Activated CD4-positive, alpha-beta T cell treated with anti-CD3 and anti-CD28 coated beads, Interleukin-2, amount 10 ng/mL, durations not matched to agents 24 days and 14 days (primary cell): ENCODE measurements at regions of chr6 and their contacts with region 1.

Region 1: GRCh38 chr6:111478749-111479148 is 4.3 kb downstream of the REV3L start:
- DNase-seq: peak; percentile 68
- H3K4me3 Mint-ChIP-seq: peak overlapping the region; percentile 20
- H3K27ac Mint-ChIP-seq: peak overlapping the region; percentile 70
- H3K4me1 Mint-ChIP-seq: peaks cover 26% of the 10 kb centered on the region
- H3K27me3 Mint-ChIP-seq: no peaks in the 10 kb centered on the region

Region 2: GRCh38 chr6:111361648-111362047 is 117.1 kb before region 1 on chr6:
- intact Hi-C with region 1: loop called (anchors 5 kb)
- DNase-seq: no peak
- H3K4me3 Mint-ChIP-seq: no peak overlapping the region
- H3K27ac Mint-ChIP-seq: no peak overlapping the region
- H3K4me1 Mint-ChIP-seq: no peaks in the 10 kb centered on the region
- H3K27me3 Mint-ChIP-seq: no peaks in the 10 kb centered on the region

Region 3: DNA sequence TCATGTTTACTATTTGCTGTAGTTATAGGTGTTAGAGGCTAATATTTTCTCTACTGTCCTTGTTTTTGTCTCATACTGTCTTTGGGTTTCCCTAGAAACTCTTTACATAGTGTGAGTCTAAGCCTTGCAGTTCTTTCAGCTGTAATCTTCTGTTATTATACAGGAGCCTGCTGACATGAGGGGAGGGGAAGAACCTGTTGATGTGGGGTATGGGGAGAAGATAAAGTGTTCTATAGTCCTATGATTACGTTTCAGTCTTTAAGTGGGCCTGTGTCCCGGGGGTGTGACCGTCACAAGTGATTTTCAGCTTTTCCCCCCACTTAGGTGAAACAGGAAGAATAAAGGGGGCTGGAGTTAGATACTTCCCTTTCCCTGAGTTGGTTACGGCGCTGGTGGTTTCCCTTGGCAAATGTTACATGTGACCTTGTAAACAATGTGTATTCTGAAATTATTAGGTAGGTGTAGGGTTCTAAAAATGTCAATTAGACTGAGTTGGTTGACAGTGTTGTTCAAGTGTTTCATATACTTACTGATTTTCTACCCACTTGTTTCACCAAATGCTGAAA is 37.0 kb before region 1 on chr6:
- intact Hi-C with region 1: loop called (anchors 5 kb)
- DNase-seq: no peak
- H3K4me3 Mint-ChIP-seq: no peak overlapping the region
- H3K27ac Mint-ChIP-seq: no peak overlapping the region
- H3K4me1 Mint-ChIP-seq: peaks cover 8% of the 10 kb centered on the region
- H3K27me3 Mint-ChIP-seq: no peaks in the 10 kb centered on the region

Region 4: DNA sequence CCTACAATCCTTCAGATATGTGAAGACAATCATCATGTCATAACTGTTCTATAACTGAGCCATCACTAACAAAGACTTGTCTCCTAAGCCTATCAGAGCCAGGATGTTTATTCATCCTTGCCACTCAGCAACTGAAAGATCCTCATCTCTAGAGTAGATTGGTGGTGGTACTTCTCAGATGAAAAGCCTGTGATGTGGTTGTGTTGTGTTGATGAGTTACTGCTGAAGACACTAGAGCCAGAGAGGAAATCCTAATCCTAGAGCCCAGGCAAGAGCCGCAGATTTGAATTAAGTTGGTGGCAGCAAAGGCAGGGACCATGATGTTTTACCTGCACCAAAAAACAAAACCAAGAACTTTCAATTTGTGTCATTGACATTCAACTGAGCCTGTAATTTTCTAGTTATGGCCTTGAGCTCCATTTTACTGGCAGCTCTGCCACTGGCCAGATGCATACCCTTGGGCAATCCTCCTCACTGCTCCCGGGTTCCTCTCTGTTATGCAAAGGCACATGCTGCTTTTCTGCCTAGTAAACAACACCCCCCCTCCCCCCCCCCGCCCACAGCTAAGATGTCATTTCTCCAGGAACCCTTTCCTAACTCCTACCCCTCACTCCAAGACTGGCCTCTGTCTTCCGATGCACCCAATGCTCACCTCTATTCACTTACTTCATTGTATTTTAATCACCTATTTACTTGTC is 54.5 kb after region 1 on chr6:
- intact Hi-C with region 1: no loop called
- DNase-seq: peak; percentile 79
- H3K4me3 Mint-ChIP-seq: peak overlapping the region; percentile 2
- H3K27ac Mint-ChIP-seq: peak overlapping the region; percentile 46
- H3K4me1 Mint-ChIP-seq: peaks cover 26% of the 10 kb centered on the region
- H3K27me3 Mint-ChIP-seq: no peaks in the 10 kb centered on the region